Right cardiac atrium (tissue), 5 donors: ENCODE measurements at regions of chr4 and their contacts with region 1.

Region 1: GRCh38 chr4:138789796-138790195 is 225.8 kb upstream of the NOCT start:
- DNase-seq: no peak
- ATAC-seq: no peak
- H3K4me3 ChIP-seq: no peak overlapping the region
- H3K27ac ChIP-seq: no peak overlapping the region
- H3K4me1 ChIP-seq: no peaks in the 10 kb centered on the region
- H3K27me3 ChIP-seq: no peaks in the 10 kb centered on the region

Region 2: DNA sequence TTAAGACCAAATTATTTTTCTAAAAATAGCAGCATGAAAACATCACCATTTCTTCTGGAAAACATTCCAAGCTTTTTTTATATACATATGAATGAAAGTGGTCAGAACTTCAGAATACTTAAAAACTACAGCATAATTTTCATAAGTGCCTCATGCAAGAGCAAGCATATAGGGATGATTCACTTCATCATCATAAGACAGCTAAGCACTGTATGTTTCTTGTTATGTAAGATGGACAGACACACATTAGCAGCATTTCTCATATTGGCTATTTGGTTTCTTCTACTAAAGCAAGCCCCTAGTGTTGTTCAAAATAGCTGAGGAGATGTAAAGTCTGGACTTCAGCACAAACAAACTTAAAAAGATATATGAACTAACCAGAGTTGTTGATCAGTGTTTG is 12.7 kb after region 1 on chr4:
- intact Hi-C with region 1: loop called in 1 of 4 experiments (anchors 2 kb)
- DNase-seq: no peak
- ATAC-seq: no peak
- H3K4me3 ChIP-seq: no peak overlapping the region
- H3K27ac ChIP-seq: no peak overlapping the region
- H3K4me1 ChIP-seq: no peaks in the 10 kb centered on the region
- H3K27me3 ChIP-seq: no peaks in the 10 kb centered on the region